Calu3 (cell line): ENCODE measurements at regions of chr16 and their contacts with region 1.

Region 1: DNA sequence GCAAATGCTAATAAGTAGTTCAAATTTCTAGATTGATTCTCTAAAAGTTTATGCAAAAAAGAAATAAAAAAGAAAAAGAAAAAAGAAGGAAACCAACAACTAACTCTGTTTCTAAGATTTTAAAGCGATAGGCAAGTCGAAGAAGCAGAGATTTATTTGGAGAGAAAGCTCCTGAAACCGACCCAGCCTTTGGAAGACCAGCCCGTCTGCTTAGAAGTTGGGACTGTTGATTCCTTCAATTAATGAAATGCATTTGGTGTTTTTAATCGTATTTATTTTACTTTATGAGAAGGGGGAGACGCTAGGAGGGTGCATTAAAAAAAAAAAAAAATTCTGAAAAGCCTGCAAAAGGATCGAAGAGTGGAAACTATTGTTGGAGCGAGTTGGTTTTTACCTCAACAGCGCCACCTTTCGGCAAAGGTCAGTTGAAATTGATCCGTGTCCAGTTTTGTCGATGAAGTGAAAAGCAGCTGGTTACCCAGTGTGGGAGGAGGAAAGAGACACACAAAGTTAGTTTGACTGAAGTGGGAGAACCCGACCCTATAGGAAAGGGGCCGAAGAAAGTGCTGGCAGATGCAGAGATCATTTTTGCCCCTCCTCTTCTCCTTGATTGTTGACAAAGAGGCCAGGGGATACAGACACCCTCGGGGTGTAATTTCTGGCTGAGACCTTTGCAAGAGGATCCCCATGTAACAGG is 1.5 kb upstream of the MAF start:
- DNase-seq: peak; percentile 82
- H3K4me3 Mint-ChIP-seq: peak overlapping the region; percentile 81
- H3K27ac Mint-ChIP-seq: peak overlapping the region; percentile 10
- H3K4me1 Mint-ChIP-seq: peaks cover 24% of the 10 kb centered on the region
- H3K27me3 Mint-ChIP-seq: peaks cover 64% of the 10 kb centered on the region
- CTCF ChIP-seq: peak; percentile 84

Region 2: DNA sequence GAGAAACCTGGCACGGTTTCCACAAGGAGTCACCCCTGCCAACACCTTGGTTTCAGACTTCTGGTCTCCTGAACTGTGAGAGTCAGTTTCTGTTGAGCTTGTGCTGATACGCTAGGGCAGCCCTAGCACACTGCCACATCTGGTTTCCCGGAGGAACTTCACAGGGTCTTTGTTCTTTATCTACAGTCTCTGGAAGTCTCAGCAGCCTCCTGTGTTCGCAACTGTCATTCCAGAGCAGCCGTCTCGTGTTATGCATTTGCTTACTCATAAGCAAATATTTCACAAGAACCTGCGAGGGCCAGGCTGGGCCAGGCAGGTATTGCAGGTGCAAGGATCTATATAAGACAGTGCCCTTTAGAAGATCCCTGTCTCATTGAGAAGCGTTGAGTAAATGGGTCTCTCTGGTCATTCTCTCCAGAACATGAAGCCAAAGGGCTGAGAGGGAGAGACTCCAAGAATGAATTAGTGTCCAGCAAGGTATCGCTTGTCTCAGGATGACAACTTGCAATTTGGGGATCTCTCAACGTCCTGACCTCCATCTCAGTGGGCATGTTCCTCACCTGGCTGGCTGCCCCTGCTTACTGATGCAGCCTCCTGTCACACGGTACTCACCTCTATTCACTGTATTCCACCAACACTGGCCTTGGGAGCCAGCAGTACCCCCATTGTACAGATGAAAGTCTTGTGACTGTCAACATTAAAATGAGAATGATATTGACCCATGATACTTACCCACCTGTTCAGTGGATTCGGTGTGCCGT is 1361.4 kb before region 1 on chr16:
- CTCF ChIA-PET with region 1: no interaction called
- intact Hi-C with region 1: loop called (anchors 5 kb)
- DNase-seq: peak; percentile 75
- H3K4me3 Mint-ChIP-seq: peak overlapping the region; percentile 1
- H3K27ac Mint-ChIP-seq: peak overlapping the region; percentile 16
- H3K4me1 Mint-ChIP-seq: peaks cover 57% of the 10 kb centered on the region
- H3K27me3 Mint-ChIP-seq: no peaks in the 10 kb centered on the region
- CTCF ChIP-seq: no peak

Region 3: GRCh38 chr16:78925083-78925767 is 676.9 kb before region 1 on chr16:
- CTCF ChIA-PET with region 1: no interaction called
- intact Hi-C with region 1: loop called (anchors 5 kb)
- DNase-seq: peak; percentile 39
- H3K4me3 Mint-ChIP-seq: no peak overlapping the region
- H3K27ac Mint-ChIP-seq: no peak overlapping the region
- H3K4me1 Mint-ChIP-seq: no peaks in the 10 kb centered on the region
- H3K27me3 Mint-ChIP-seq: no peaks in the 10 kb centered on the region
- CTCF ChIP-seq: peak; percentile 13

Region 4: DNA sequence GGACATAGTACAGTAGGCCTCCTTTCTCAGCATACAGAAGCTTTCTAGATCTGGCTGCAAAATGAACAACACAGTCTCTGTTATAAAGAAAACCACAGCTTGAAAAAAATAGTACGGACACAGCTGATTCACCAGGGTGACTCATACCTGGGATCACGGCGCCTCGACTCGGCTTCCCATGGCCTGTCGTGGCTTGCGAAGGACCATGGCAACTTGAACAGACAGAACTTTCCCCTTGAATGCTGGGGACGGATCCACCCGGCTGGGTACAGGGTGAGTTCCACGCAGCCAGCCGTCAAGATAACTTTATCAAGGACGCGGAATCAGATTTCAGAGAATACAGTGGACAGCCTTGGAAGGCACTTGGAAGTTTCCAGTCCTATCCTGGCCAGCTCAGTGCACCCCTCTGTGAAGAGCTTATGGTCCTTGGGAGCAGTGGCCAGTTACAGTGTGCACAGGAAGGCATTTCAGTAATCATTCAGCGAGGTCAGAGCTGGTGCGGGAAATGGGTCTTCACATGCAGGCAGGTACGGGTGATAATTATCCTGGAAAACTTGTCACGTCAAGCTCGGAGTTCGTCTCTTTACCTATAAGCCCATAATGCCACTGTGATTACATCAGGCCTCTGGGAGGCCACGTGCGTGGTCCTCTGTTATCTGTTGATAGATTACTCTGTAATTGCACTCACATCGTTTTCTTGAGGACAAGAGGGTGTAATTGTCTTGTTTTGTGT is 56.4 kb after region 1 on chr16:
- CTCF ChIA-PET with region 1: interaction called, 8 read pairs
- intact Hi-C with region 1: loop called (anchors 5 kb)
- DNase-seq: peak; percentile 84
- H3K4me3 Mint-ChIP-seq: no peak overlapping the region
- H3K27ac Mint-ChIP-seq: peak overlapping the region; percentile 74
- H3K4me1 Mint-ChIP-seq: peaks cover 27% of the 10 kb centered on the region
- H3K27me3 Mint-ChIP-seq: no peaks in the 10 kb centered on the region
- CTCF ChIP-seq: no peak

Region 5: DNA sequence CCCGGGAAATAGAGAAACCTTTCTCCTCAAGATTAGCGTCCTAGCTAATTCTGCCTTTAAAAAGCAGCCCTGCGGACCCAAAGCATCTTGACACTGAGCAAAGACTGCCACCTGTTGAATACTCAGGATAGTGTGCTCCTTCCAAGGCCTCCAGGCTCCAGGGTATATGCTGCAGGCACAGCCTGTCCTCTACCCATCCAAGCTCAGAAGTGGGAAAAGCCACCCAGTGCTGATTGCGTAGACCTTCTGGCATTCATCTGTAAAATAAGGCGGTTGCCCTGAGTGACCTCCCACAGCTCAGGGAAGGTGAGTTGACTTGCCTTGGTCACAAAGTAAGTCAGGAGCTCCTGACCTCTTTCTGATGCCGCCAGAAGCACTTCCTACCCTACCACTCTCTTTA is 482.6 kb after region 1 on chr16:
- CTCF ChIA-PET with region 1: interaction called, 4 read pairs
- intact Hi-C with region 1: loop called (anchors 5 kb)
- DNase-seq: peak; percentile 21
- H3K4me3 Mint-ChIP-seq: no peak overlapping the region
- H3K27ac Mint-ChIP-seq: no peak overlapping the region
- H3K4me1 Mint-ChIP-seq: no peaks in the 10 kb centered on the region
- H3K27me3 Mint-ChIP-seq: no peaks in the 10 kb centered on the region
- CTCF ChIP-seq: peak; percentile 32